SK-N-SH (cell line): ENCODE measurements at regions of chr1 and their contacts with region 1.

Region 1: DNA sequence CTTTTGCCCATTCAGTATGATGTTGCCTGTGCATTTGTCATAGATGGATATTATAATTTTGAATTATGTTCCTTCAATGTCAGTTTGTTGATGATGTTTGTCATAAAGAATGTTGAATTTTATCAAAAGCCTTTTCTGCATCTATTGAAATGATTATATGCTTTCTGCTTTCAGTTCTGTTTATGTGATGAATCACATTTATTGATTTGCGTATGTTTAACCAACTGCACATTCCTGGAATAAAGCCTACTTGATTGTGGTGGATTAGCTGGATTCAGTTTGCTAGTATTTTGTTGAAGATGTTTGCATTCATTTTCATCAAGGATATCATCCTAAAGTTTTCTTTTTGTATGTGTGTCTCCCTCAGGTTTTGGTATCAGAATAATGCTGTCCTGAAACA is 5.7 kb upstream of the OR2M4 start:
- DNase-seq: no peak
- H3K4me3 ChIP-seq: no peak overlapping the region
- H3K27ac ChIP-seq: no peak overlapping the region
- H3K4me1 ChIP-seq: no peaks in the 10 kb centered on the region
- H3K27me3 ChIP-seq: no peaks in the 10 kb centered on the region
- CTCF ChIP-seq: no peak
- EP300 ChIP-seq: no peak
- RAD21 ChIP-seq: no peak

Region 2: DNA sequence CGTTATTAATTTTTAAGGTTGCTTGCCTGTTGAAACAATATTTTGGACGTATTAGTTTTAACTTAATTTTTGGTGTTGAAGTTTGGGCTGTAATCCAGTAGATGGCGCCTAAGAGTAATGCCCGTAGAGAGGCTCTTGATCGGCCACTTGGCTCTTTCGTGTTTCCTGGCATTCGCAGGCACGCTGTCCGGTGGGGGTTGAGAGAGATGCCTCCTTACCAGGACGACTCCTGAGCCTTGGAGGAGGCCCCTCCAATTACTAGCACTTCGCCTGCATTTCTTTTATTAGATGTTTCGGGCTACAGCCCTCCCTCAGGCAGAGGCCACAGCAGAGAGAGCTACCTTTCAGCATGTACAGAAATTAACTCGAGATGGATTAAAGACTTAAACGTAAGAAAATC is 17.7 kb after region 1 on chr1:
- CTCF ChIA-PET with region 1: interaction called, 11 read pairs
- POLR2A ChIA-PET with region 1: no interaction called
- DNase-seq: peak; percentile 32
- H3K4me3 ChIP-seq: no peak overlapping the region
- H3K27ac ChIP-seq: no peak overlapping the region
- H3K4me1 ChIP-seq: no peaks in the 10 kb centered on the region
- H3K27me3 ChIP-seq: no peaks in the 10 kb centered on the region
- CTCF ChIP-seq: peak; percentile 66
- EP300 ChIP-seq: no peak
- RAD21 ChIP-seq: peak; percentile 51

Region 3: DNA sequence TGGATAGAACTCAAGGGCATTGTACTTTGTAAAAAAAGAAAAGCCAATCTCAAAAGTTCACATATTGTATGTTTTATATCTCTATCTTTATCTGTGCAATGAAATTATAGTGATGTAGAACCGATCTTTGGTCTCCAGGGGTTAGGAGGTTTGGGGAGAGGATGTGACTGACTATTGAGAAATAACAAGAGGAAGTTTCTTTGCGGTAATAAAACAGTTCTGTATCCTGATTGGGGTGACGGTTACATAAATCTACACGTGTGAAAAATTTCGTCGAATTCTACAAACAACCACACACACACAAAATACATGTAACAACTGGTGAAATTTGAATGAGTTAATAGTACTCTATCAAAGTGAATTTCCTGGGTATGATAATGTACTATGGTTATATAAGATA is 62.9 kb after region 1 on chr1:
- CTCF ChIA-PET with region 1: no interaction called
- POLR2A ChIA-PET with region 1: no interaction called
- DNase-seq: no peak
- H3K4me3 ChIP-seq: no peak overlapping the region
- H3K27ac ChIP-seq: no peak overlapping the region
- H3K4me1 ChIP-seq: no peaks in the 10 kb centered on the region
- H3K27me3 ChIP-seq: no peaks in the 10 kb centered on the region
- CTCF ChIP-seq: no peak
- EP300 ChIP-seq: no peak
- RAD21 ChIP-seq: no peak

Region 4: GRCh38 chr1:248406721-248407692 is 181.5 kb after region 1 on chr1:
- CTCF ChIA-PET with region 1: no interaction called
- POLR2A ChIA-PET with region 1: no interaction called
- DNase-seq: no peak
- H3K4me3 ChIP-seq: no peak overlapping the region
- H3K27ac ChIP-seq: no peak overlapping the region
- H3K4me1 ChIP-seq: no peaks in the 10 kb centered on the region
- H3K27me3 ChIP-seq: no peaks in the 10 kb centered on the region
- CTCF ChIP-seq: no peak
- EP300 ChIP-seq: no peak
- RAD21 ChIP-seq: no peak